ENCODE measurements at regions of chr15 and their contacts with region 1.

Region 1: GRCh38 chr15:77369168-77369567 is 50.7 kb downstream of the PEAK1 start:
- DNase-seq: no peak
- ATAC-seq: no peak

Region 2: DNA sequence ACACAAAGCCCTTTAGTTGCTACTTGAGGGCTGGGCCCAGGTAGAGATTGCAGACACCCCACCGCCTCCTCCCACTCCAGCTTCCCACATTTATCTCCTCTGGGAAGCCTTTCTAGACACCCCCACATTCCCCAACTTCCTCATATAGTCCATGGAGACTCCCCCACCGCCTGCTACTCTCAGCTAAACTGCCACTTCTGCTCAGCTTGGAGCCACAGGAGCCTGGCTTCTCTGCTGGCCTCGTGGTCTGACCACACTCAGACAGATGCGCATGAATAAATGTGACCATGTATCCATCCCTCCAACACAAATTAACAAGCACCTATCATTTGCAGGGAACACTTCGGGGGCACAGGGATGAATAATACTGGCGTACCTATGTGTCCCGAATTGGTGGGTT is 875.7 kb after region 1 on chr15:
- intact Hi-C with region 1: loop called (anchors 5 kb)
- DNase-seq: peak; percentile 28
- ATAC-seq: no peak

Measured in sciatic nerve (tissue), 2 donors.